PC-3 (cell line): ENCODE measurements at regions of chr10 and their contacts with region 1.

Region 1: GRCh38 chr10:132836832-132837540 is 51.0 kb upstream of the NKX6-2 start:
- DNase-seq: peak; percentile 41
- ATAC-seq: peak; percentile 39
- H3K4me3 ChIP-seq: peak overlapping the region; percentile 30; the same call in 1 of the 2 replicates
- H3K27ac ChIP-seq: no peak overlapping the region
- H3K4me1 ChIP-seq: peaks cover 5% of the 10 kb centered on the region; the same call in 1 of the 2 replicates
- H3K27me3 ChIP-seq: peaks cover 39% of the 10 kb centered on the region
- CTCF ChIP-seq: peak; percentile 90

Region 2: GRCh38 chr10:132654702-132655661 is 182.0 kb before region 1 on chr10:
- CTCF ChIA-PET with region 1: no interaction called
- POLR2A ChIA-PET with region 1: no interaction called
- intact Hi-C with region 1: loop called (anchors 5 kb)
- DNase-seq: peak; percentile 69
- ATAC-seq: peak; percentile 73
- H3K4me3 ChIP-seq: no peak overlapping the region
- H3K27ac ChIP-seq: no peak overlapping the region
- H3K4me1 ChIP-seq: no peaks in the 10 kb centered on the region
- H3K27me3 ChIP-seq: no peaks in the 10 kb centered on the region
- CTCF ChIP-seq: peak; percentile 89

Region 3: DNA sequence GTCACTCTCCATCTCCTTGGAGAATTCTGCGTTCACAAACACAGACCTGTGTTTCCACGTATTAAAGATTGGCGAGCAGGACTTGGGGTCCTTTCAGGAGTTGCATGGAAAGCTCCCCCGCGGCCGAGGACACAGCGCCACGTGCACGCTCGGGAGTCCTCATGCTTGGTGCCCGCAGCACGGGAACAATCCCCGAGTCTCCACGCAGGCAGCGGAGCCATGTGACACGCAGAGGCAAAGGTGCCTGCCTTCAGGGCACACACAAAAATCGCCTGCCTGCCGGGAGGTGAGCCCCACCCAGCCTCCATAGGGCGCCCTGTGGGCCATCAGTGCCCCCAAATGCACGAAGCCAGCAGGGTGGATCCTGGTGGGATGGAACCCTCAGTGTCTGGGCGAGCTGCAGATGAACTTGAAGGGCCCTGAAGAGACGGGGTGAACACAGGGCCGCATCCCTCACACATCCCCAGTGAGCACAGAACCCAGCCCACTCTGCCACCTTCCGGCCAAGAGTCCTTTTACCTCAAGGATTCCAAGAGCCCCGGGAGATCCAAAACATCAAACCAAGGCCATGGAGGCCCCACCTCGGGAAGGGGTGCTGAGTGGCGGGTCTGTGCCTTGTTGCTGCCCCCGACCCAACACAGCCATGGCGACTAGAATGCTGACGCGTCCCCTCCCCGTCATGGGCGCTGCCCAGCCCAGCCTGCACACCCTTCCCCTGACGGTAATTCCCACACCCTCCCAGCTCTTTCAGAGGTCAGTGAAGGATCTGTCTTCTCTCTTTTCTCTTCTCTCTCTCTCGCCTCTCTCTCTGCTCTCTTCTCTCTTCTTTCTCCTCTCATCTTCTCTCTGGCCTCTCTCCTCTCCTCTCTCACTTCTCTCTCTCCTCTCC is 49.5 kb after region 1 on chr10:
- CTCF ChIA-PET with region 1: no interaction called
- POLR2A ChIA-PET with region 1: no interaction called
- intact Hi-C with region 1: loop called (anchors 5 kb)
- DNase-seq: peak; percentile 24
- ATAC-seq: peak; percentile 68
- H3K4me3 ChIP-seq: no peak overlapping the region
- H3K27ac ChIP-seq: no peak overlapping the region
- H3K4me1 ChIP-seq: no peaks in the 10 kb centered on the region
- H3K27me3 ChIP-seq: peaks cover 40% of the 10 kb centered on the region
- CTCF ChIP-seq: peak; percentile 41; the same call in 1 of the 2 replicates

Region 4: DNA sequence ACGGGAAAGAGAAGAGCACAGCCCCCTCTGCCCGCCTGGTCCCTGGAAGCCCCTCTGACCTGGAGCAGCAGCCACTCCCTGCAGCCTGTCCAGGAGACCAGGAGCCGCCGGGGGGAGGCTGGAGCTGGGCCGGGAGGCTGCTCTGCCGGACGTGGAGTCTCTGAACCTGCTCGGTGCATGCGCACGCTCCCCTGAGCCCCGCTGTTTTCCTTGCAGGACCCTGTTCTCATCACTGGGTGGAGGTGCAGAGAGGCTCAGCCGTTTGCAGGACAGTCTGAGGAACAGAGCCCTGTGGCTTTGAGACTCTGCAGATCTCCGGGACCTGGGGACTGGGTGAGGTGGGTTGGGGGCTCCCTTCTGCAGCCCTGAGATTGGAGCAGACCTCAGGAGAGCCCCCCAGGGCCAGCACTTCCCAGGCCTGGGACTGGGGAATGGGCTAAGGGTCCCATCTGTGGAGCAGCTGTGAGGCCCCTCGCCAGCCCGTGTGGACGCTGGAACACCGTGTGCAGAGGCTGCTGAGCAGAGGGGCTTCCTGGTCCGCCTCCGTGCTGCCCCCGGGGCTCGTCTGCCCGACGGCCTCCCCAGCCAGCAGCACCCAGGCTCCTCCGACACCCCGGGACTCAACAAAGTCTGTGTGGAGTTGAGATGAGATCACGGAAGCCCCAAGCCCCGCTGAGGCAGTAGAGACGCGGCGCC is 202.3 kb after region 1 on chr10:
- CTCF ChIA-PET with region 1: no interaction called
- POLR2A ChIA-PET with region 1: no interaction called
- intact Hi-C with region 1: no loop called
- DNase-seq: no peak
- ATAC-seq: peak; percentile 38; the same call in 1 of the 2 replicates
- H3K4me3 ChIP-seq: no peak overlapping the region
- H3K27ac ChIP-seq: no peak overlapping the region
- H3K4me1 ChIP-seq: no peaks in the 10 kb centered on the region
- H3K27me3 ChIP-seq: peaks cover 49% of the 10 kb centered on the region
- CTCF ChIP-seq: no peak

Region 5: DNA sequence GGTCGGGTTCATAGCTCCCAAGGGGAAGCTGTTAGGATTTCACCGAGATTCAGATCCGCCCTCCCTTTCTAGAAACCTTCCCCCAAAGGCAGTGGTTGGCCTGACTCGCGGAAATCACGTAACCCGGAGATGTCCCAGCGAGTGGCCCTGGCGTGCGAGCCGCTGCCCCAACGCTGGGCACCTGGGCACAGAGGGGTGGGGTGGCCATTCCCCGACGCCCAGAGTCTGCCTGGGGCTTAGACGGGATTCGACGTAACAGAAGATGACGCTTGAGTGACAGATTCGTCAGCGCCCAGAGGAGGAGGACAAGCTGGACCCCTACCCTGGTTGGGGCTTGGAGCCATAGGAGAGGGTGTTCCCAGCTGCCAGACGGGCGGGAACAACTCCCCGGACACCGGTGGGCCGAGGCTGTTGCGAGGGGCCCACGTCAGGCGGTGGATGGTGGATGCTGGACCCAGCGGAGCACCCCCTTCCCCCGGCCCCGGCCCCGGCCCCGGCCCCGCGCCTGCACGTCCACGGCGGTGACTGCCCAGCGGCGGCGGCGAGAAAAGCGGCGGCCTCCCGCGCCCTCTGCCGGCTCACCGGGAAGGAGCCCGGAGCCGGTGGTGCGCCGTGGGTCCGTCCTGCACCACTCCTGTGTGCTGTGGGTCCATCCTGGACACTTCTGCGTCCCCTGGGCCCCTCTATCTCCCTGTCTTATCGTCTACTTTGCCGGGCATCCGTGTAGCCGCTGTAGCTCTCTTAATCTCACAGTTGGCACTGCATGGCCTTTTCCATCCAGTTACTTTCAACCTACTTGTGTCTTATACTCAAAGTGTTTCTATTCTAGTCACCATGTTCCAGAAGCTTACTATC is 287.6 kb after region 1 on chr10:
- CTCF ChIA-PET with region 1: no interaction called
- POLR2A ChIA-PET with region 1: no interaction called
- intact Hi-C with region 1: loop called (anchors 10 kb)
- DNase-seq: peak; percentile 41
- ATAC-seq: peak; percentile 93
- H3K4me3 ChIP-seq: no peak overlapping the region
- H3K27ac ChIP-seq: no peak overlapping the region
- H3K4me1 ChIP-seq: no peaks in the 10 kb centered on the region
- H3K27me3 ChIP-seq: peaks cover 17% of the 10 kb centered on the region
- CTCF ChIP-seq: peak; percentile 58